Calu3 (cell line): ENCODE measurements at regions of chr3 and their contacts with region 1.

Region 1: DNA sequence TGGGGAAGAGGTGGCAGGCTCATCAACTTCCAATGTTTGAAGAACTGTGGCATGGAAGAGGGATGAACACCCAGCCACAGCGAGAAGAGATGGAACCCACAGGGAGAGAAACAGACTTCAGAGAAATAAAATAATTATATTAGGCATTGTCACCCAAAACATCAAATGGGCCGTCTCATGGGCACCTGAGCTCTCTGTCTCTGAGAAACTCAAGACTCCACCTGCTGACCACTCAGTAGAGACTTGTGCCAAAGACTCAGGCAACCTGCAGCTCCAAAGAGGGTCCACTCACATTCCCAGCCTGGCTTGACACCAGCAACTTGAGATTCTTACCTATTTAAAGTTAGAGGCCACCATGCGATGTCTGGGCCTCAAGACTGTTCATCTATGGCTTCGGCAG is 12.0 kb downstream of the SEMA5B start:
- DNase-seq: no peak
- H3K4me3 Mint-ChIP-seq: no peak overlapping the region
- H3K27ac Mint-ChIP-seq: no peak overlapping the region
- H3K4me1 Mint-ChIP-seq: no peaks in the 10 kb centered on the region
- H3K27me3 Mint-ChIP-seq: peaks cover 81% of the 10 kb centered on the region
- CTCF ChIP-seq: no peak

Region 2: DNA sequence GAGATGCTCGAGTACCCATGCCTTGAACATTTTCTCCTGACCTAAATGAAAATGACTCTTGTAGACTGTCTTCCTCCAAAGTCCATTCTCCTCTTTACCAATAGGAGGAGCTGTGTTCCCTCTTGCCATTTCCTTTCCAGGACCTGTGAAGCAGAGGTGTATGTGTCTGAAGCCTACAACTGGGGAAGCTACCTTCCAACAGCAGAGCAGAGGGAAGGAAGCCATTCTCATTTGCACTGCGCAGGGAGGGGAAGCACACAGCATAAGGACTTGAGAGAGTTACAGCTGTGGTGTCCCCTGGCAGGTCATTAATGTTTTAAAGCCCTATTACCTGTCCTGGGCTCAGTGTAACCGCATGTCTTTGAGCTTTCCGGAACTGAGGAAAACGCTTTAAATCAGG is 260.6 kb before region 1 on chr3:
- CTCF ChIA-PET with region 1: interaction called, 10 read pairs
- intact Hi-C with region 1: no loop called
- DNase-seq: peak; percentile 32
- H3K4me3 Mint-ChIP-seq: no peak overlapping the region
- H3K27ac Mint-ChIP-seq: no peak overlapping the region
- H3K4me1 Mint-ChIP-seq: no peaks in the 10 kb centered on the region
- H3K27me3 Mint-ChIP-seq: no peaks in the 10 kb centered on the region
- CTCF ChIP-seq: peak; percentile 59

Region 3: DNA sequence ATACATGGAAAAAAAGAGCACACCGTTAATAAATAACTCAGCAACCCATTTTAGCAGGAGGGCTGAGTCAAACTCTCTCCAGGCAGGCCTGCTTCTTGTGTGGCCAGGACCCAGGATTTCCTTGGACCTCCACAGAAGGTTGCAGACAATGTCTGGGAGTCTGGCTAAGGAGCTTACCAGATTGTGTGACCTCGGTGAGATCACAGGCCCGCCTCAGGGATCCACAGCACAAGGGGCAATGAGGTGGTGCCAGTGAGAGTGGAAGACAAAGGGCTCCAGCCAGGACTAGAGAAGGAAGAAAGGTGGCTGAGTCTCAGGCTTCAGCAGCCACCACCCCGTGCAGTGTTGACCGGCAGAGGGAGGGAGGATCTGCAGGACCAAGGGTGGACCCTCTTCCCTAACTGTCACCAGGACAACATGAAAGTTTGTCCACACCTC is 154.0 kb after region 1 on chr3:
- CTCF ChIA-PET with region 1: no interaction called
- intact Hi-C with region 1: no loop called
- DNase-seq: no peak
- H3K4me3 Mint-ChIP-seq: no peak overlapping the region
- H3K27ac Mint-ChIP-seq: peak overlapping the region; percentile 20
- H3K4me1 Mint-ChIP-seq: peaks cover 13% of the 10 kb centered on the region
- H3K27me3 Mint-ChIP-seq: no peaks in the 10 kb centered on the region
- CTCF ChIP-seq: no peak